Motor neuron (in vitro differentiated cells): ENCODE measurements at regions of chr4 and their contacts with region 1.

Region 1: DNA sequence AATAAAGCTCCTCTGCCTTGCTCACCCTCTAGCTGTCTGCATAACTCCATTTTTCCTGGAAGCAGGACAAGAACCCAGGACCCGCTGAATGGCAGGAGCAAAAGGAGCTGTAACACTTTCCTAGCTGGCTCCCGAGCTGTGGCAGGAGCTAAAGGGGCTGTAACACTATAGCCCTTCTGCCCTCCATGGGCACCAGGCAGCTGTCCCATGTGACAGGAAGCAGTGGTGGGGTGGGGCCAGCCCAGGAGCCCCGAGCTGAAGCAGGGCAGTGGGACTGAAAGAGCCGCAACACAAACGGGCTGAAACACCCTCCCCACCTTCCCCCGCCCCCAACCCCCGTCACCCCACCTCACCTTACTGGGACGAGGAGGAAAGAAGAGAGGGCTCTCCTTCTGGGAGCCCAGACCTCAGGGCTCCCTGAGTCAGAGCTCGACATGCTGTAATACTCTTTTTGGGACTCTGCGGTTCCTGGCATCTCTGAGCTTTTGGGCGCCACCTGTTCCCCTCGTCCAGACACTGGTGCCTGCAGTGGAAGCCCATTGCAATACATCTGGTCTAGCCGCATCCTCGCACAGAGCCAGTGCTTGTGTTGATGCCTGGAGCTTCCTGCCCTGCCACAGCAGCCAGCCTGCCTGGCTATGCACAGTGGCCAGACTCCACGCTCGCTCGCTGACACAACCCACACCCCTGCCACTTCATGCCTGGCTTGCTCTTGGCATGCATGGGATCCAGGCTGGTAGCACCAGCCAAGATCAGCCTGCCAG is 39.4 kb downstream of the PPM1K start:
- ATAC-seq: no peak
- H3K4me3 ChIP-seq: no peak overlapping the region
- H3K27ac ChIP-seq: no peak overlapping the region
- H3K4me1 ChIP-seq: no peaks in the 10 kb centered on the region

Region 2: DNA sequence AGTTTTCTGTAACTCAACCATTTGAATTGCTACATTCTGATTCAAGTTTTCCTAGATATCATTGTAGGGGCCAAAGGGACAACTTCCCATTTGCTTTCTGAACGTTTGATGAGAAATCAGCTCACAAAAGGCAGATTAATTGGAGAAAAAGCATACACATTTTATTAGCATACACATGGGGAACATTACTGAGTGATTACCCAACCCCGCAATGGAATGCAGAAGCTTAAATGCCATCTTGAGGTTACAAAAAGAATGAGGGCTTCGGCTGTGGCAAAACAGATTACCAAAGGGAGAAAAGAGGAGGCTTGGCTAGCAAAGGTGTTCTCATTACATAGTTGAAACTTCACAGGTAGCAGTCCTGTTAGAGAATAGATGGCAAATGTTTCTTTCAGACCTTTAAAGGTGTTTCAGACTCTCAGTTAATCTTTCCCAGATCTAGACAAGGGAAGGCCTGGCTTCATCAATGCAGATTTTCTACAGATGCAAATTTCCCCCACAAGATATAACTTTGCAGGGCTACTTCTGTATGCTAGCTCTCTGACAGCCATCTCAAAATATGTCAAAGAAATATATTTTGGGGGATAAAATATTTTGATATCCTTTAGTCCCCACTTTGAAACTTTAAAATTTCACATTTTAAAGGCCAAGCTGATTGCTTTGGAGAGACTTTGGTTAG is 107.2 kb after region 1 on chr4:
- in situ Hi-C with region 1: loop called in 1 of 9 experiments (anchors 25 kb)
- ATAC-seq: peak in 3 of 8 experiments; percentile 62 to 97 (median 95)
- H3K4me3 ChIP-seq: no peak overlapping the region
- H3K27ac ChIP-seq: no peak overlapping the region
- H3K4me1 ChIP-seq: no peaks in the 10 kb centered on the region

Region 3: GRCh38 chr4:88613417-88613875 is 368.4 kb after region 1 on chr4:
- in situ Hi-C with region 1: no loop called
- ATAC-seq: peak in 5 of 8 experiments; percentile 26 to 74 (median 45)
- H3K4me3 ChIP-seq: no peak overlapping the region
- H3K27ac ChIP-seq: no peak overlapping the region
- H3K4me1 ChIP-seq: peaks cover 5 to 8% of the 10 kb centered on the region in 2 donors